B cell (primary cell): ENCODE measurements at regions of chr1 and their contacts with region 1.

Region 1: DNA sequence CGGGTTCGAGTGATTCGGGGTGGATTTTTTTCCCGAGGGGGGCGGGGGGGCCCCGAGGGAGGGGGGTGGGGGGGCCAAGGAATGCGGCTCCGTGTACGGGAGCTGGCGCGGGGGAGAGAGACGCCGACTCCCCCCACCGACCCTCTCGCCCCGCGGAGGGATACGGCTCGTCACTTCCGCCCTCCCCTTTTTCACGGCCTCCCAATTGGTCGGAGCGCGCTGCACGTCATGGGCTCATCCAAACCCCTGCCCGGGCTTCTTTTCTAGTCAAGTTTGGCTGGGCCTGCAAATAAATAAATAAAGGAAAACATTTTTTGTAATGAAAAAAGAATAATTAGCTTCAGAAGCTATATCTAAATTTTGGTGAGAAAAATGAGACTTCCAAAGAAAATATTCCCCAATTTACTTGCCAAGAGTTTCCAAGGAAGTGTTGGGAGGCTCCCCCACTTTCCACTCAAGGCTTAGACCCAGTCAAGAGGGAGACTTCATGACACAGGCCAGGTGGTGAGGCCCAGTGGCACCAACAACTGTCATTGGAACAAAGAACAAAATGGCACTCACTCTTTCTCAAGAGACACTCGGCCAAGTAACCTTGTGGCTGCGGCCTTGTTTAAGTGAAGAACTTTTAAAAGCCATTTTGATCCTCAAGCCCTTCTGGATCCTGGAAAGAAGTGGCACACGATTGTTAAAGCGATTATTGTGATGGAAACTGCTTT is at the start of gene POGZ:
- DNase-seq: peak; percentile 93
- ATAC-seq: peak; percentile 72
- H3K4me3 ChIP-seq: peak within 1 kb of the TSS; percentile 74 to 94 (median 83)
- H3K4me3 Mint-ChIP-seq: peak within 1 kb of the TSS; percentile 89
- H3K27ac ChIP-seq: peak within 1 kb of the TSS; percentile 84 to 85
- H3K27ac Mint-ChIP-seq: peak within 1 kb of the TSS; percentile 98
- H3K4me1 ChIP-seq: peaks cover 16 to 27% of the 10 kb centered on the region in 2 donors
- H3K4me1 Mint-ChIP-seq: peaks cover 30% of the 10 kb centered on the region
- H3K27me3 ChIP-seq: peaks cover 0 to 19% (median 9%) of the 10 kb centered on the region in 4 experiments
- H3K27me3 Mint-ChIP-seq: peaks cover 16% of the 10 kb centered on the region
- CTCF ChIP-seq: no peak
- total RNA-seq, gene POGZ: 188 and 194 TPM in 2 replicates

Region 2: GRCh38 chr1:151085953-151086559 is 373.4 kb before region 1 on chr1:
- CTCF ChIA-PET with region 1: no interaction called
- POLR2A ChIA-PET with region 1: no interaction called
- intact Hi-C with region 1: no loop called
- DNase-seq: no peak
- ATAC-seq: no peak
- H3K4me3 ChIP-seq: no peak overlapping the region
- H3K4me3 Mint-ChIP-seq: no peak overlapping the region
- H3K27ac ChIP-seq: no peak overlapping the region
- H3K27ac Mint-ChIP-seq: no peak overlapping the region
- H3K4me1 ChIP-seq: peaks cover 0 to 4% of the 10 kb centered on the region in 2 donors
- H3K4me1 Mint-ChIP-seq: peaks cover 5% of the 10 kb centered on the region
- H3K27me3 ChIP-seq: no peaks in the 10 kb centered on the region
- H3K27me3 Mint-ChIP-seq: no peaks in the 10 kb centered on the region
- CTCF ChIP-seq: no peak

Region 3: GRCh38 chr1:151346769-151347522 is 112.5 kb before region 1 on chr1 and contains the start of gene RFX5:
- CTCF ChIA-PET with region 1: no interaction called
- POLR2A ChIA-PET with region 1: no interaction called
- intact Hi-C with region 1: loop called (anchors 1 kb)
- DNase-seq: peak; percentile 99
- ATAC-seq: peak; percentile 91
- H3K4me3 ChIP-seq: peak within 1 kb of the TSS; percentile 81 to 95 (median 85)
- H3K4me3 Mint-ChIP-seq: peak within 1 kb of the TSS; percentile 92
- H3K27ac ChIP-seq: peak within 1 kb of the TSS; percentile 98 to 99
- H3K27ac Mint-ChIP-seq: peak within 1 kb of the TSS; percentile 97
- H3K4me1 ChIP-seq: peaks cover 34 to 44% of the 10 kb centered on the region in 2 donors
- H3K4me1 Mint-ChIP-seq: peaks cover 49% of the 10 kb centered on the region
- H3K27me3 ChIP-seq: no peaks in the 10 kb centered on the region
- H3K27me3 Mint-ChIP-seq: no peaks in the 10 kb centered on the region
- CTCF ChIP-seq: no peak
- total RNA-seq, gene RFX5: 207 and 208 TPM in 2 replicates

Region 4: DNA sequence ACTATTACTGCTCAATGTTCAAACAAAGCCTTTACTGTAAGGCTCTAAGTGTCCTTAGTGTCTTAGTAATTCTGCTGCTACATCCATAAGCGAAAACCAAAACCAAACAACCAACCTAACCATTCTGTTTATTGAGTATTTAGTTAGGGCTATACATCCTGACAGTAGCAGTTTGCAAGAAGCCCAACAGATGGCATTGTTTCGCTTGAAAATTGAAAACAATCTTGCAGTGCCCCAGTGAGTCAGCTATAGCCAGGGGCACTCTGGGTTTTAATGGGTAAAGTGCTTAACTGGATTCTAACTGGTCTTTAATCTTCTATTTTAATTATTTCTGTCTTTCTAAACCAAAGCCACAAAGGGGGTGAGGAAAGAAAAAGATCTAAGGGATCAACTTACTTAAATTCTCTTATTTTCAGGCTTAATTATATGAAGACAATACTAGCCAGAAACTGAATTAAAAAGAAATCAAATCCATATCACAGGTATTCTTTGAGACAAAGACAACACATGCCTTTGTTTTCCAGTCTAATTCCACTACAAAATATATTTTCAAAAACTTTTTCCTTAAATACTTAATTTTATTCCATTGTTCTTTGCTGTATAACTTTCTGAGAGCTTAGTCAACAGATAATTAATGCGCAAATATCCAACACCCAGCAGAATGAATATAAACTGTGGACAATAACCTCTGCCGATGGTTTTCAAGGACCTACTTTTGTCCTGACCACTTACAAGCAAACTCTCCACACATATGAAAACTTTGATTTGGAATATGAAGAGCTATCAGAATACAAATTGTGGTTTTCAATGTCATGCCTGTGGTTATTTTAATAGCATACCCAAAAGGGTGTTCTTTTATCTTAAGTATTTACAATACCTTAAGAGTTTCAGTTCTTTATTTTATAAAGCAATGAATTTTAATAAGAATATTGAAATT is 15.4 kb before region 1 on chr1:
- CTCF ChIA-PET with region 1: interaction called, 12 read pairs
- POLR2A ChIA-PET with region 1: interaction called, 6 read pairs
- intact Hi-C with region 1: no loop called
- DNase-seq: peak; percentile 80
- ATAC-seq: peak; percentile 94
- H3K4me3 ChIP-seq: no peak overlapping the region
- H3K4me3 Mint-ChIP-seq: no peak overlapping the region
- H3K27ac ChIP-seq: peak overlapping the region in 1 of 2 donors; percentile 28
- H3K27ac Mint-ChIP-seq: peak overlapping the region; percentile 24
- H3K4me1 ChIP-seq: peaks cover 19 to 21% of the 10 kb centered on the region in 2 donors
- H3K4me1 Mint-ChIP-seq: peaks cover 46% of the 10 kb centered on the region
- H3K27me3 ChIP-seq: no peaks in the 10 kb centered on the region
- H3K27me3 Mint-ChIP-seq: no peaks in the 10 kb centered on the region
- CTCF ChIP-seq: peak; percentile 87

Region 5: DNA sequence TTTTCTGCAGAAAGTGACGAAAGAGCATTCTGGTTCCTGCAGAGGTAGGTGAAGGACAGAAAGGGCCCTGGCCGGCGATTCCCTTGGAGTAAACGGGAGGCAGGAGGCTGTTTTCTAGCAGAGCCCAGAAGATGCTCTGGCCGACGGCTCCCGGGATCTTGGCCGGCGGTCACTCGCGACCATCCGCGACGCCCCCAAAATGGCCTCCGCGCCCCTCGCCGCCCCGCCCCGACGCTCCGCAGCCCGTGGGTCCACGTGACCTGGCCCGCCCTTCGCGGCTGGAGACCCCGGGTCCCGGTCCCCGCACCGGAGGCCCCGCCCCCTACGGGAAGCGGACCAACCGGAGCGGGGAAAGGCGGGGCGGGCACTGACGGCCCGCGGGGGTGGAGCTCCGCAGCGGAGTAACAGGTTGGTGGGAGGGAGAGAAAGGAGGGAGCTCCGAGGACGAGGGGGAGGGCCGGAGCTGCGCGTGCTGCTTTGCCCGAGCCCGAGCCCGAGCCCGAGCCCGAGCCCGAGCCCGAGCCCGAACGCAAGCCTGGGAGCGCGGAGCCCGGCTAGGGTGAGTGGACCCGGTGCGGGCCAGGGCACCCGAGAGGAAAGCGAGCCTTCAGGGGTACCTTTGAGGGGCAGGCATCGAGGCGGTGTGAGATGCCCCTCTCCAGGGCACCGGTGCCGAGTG is 51.6 kb after region 1 on chr1 and contains the start of gene CGN:
- CTCF ChIA-PET with region 1: no interaction called
- POLR2A ChIA-PET with region 1: interaction called, 7 read pairs
- intact Hi-C with region 1: loop called (anchors 1 kb)
- DNase-seq: peak; percentile 87
- ATAC-seq: peak; percentile 98
- H3K4me3 ChIP-seq: peak within 1 kb of the TSS; percentile 66 to 85 (median 77)
- H3K4me3 Mint-ChIP-seq: peak within 1 kb of the TSS; percentile 96
- H3K27ac ChIP-seq: no peak within 1 kb of the TSS
- H3K27ac Mint-ChIP-seq: peak within 1 kb of the TSS; percentile 78
- H3K4me1 ChIP-seq: peaks cover 16 to 23% of the 10 kb centered on the region in 2 donors
- H3K4me1 Mint-ChIP-seq: peaks cover 15% of the 10 kb centered on the region
- H3K27me3 ChIP-seq: peaks cover 0 to 12% (median 2%) of the 10 kb centered on the region in 4 experiments
- H3K27me3 Mint-ChIP-seq: no peaks in the 10 kb centered on the region
- CTCF ChIP-seq: no peak
- total RNA-seq, gene CGN: 0.49 and 0.81 TPM in 2 replicates

Region 6: DNA sequence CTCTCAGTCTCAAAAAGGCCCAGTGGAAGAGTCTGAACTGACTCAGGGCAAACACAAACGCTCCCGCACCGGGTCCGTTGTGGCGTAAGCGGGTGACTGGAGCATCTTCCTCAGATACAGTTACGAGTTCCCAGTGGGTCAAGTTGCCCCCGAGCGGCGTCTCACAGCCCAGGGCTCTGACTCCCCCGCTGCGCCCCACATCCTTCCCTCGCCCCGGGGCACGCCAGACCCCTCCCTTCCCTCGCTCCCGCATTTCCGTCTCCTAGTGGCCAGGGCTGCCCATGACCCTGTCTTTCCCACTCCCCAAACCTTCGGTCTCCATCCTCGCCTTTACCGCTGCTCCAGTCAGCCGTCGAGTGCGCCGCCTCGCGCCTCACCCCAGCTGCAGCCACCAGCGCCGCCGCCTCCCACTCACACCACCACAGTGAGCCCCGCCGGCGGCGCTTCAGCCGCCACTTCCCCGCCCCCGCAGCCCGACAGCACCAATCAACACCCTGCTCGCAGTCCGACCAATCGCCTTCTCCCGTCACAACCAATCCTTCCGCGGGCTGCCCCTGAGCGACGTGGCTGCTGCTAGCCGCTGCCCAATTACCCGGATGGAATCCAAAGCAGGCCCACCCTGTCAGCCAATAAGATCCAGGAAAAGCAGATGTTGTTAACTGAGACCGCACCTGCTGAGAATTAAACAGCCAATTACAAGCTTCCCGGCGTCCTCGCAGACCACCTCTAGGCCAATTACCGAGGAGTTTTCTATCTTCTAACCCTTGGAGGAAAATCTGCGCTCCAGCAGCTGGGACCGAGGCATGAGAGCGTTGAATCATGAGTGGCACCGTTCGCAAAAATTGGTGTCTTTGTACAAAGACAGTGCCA is 330.8 kb after region 1 on chr1 and contains the start of gene TDRKH:
- CTCF ChIA-PET with region 1: no interaction called
- POLR2A ChIA-PET with region 1: interaction called, 3 read pairs
- intact Hi-C with region 1: loop called (anchors 1 kb)
- DNase-seq: peak; percentile 99
- ATAC-seq: peak; percentile 93
- H3K4me3 ChIP-seq: peak within 1 kb of the TSS; percentile 72 to 97 (median 91)
- H3K4me3 Mint-ChIP-seq: peak within 1 kb of the TSS; percentile 96
- H3K27ac ChIP-seq: peak within 1 kb of the TSS; percentile 15 to 67
- H3K27ac Mint-ChIP-seq: peak within 1 kb of the TSS; percentile 89
- H3K4me1 ChIP-seq: peaks cover 9 to 10% of the 10 kb centered on the region in 2 donors
- H3K4me1 Mint-ChIP-seq: peaks cover 26% of the 10 kb centered on the region
- H3K27me3 ChIP-seq: no peaks in the 10 kb centered on the region
- H3K27me3 Mint-ChIP-seq: no peaks in the 10 kb centered on the region
- CTCF ChIP-seq: peak; percentile 14
- total RNA-seq, gene TDRKH: 12.8 and 13.3 TPM in 2 replicates